Prostate gland (tissue), 2 donors: ENCODE measurements at regions of chr10 and their contacts with region 1.

Region 1: GRCh38 chr10:101214446-101215396 is 14.5 kb downstream of the LBX1 start:
- DNase-seq: peak; percentile 30
- H3K4me3 ChIP-seq: no peak overlapping the region
- H3K27ac ChIP-seq: no peak overlapping the region
- H3K4me1 ChIP-seq: peaks cover 3% of the 10 kb centered on the region
- H3K27me3 ChIP-seq: peaks cover 55% of the 10 kb centered on the region
- CTCF ChIP-seq: peak; percentile 72 to 88 (median 78)
- POLR2A ChIP-seq: no peak

Region 2: GRCh38 chr10:101291331-101292193 is 76.8 kb after region 1 on chr10:
- intact Hi-C with region 1: loop called (anchors 5 kb)
- DNase-seq: peak; percentile 24
- H3K4me3 ChIP-seq: peak overlapping the region; percentile 37 to 40
- H3K27ac ChIP-seq: no peak overlapping the region
- H3K4me1 ChIP-seq: no peaks in the 10 kb centered on the region
- H3K27me3 ChIP-seq: no peaks in the 10 kb centered on the region
- CTCF ChIP-seq: peak; percentile 22 to 57 (median 45)
- POLR2A ChIP-seq: no peak

Region 3: DNA sequence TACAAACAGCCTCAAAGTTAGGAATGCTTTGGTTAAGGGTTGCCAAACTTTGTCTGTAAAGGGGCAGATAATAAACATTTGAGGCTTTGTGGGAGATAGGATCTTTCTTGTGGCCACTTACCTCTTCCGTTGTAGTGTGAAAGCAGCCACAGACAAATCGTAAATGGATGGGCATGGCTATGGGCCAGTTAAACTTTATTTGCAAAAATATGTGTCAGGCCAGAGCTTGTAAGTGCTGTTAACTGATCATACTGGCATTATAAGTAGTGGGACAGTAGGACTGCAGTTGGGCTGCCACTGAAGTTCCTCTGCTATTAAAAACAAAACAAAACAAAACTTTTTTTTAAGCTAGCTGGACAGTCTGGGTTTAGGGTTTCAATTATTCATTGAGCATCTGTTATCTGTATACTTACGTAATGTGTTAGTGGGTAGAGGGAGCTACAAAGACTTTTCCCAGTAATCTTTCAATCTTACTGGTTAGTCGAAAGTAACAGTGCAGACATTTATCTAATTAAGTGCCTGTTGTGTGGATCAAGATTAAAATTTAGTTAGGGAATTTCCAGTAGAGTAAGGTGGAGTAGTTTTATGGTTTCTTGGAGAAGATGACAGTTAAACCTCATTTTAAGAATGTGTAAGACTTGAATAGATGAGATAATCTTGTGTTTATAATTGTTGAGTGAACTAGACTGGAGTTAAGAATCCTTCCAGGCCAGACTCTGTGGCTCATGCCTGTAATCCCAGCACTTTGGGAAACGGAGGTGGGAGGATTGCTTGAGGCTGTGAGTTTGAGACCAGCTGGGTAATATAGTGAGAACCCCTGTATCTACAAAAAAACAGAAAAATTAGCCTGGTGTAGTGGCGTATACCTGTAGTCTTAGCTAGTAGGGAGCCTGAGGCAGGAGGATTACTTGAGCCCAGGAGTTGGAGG is 239.3 kb after region 1 on chr10:
- intact Hi-C with region 1: loop called (anchors 5 kb)
- DNase-seq: no peak
- H3K4me3 ChIP-seq: no peak overlapping the region
- H3K27ac ChIP-seq: no peak overlapping the region
- H3K4me1 ChIP-seq: peaks cover 7% of the 10 kb centered on the region
- H3K27me3 ChIP-seq: no peaks in the 10 kb centered on the region
- CTCF ChIP-seq: no peak
- POLR2A ChIP-seq: no peak

Region 4: DNA sequence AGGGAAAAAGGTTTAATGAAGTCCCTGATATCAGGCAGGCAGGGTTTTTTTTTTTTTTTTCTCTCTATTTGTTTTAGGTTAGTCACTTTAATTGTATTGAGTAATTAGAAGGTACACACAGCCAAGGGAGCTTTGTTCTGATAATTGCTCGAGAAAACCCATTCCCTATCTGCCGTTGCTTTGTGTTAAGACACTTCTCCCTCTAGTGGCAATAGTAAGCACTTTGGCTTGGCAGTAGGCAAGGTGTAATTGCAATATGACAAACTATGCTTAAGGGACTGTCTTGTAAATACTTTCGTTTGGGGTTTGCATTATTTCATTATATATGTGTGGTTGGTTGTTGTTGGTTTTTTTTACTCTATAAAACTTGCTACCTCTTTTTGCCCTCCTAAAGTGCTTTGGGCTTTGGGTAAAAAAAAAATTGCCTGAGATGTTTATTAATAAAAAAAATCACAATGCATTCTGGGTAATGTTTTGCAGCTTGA is 252.6 kb after region 1 on chr10:
- intact Hi-C with region 1: loop called (anchors 2 kb)
- DNase-seq: peak; percentile 46
- H3K4me3 ChIP-seq: no peak overlapping the region
- H3K27ac ChIP-seq: no peak overlapping the region
- H3K4me1 ChIP-seq: no peaks in the 10 kb centered on the region
- H3K27me3 ChIP-seq: no peaks in the 10 kb centered on the region
- CTCF ChIP-seq: peak; percentile 45 to 76 (median 67)
- POLR2A ChIP-seq: no peak

Region 5: GRCh38 chr10:101569838-101570766 is 355.4 kb after region 1 on chr10:
- intact Hi-C with region 1: loop called (anchors 1 kb)
- DNase-seq: peak; percentile 76
- H3K4me3 ChIP-seq: peak overlapping the region; percentile 38 to 40
- H3K27ac ChIP-seq: no peak overlapping the region
- H3K4me1 ChIP-seq: no peaks in the 10 kb centered on the region
- H3K27me3 ChIP-seq: peaks cover 7% of the 10 kb centered on the region
- CTCF ChIP-seq: peak; percentile 78 to 96 (median 88)
- POLR2A ChIP-seq: no peak

Region 6: GRCh38 chr10:101782811-101783735 is 568.4 kb after region 1 on chr10 and contains the start of gene NPM3:
- intact Hi-C with region 1: loop called (anchors 5 kb)
- DNase-seq: peak; percentile 83
- H3K4me3 ChIP-seq: peak within 1 kb of the TSS; percentile 57 to 59
- H3K27ac ChIP-seq: peak within 1 kb of the TSS; percentile 39 to 53
- H3K4me1 ChIP-seq: peaks cover 5% of the 10 kb centered on the region
- H3K27me3 ChIP-seq: no peaks in the 10 kb centered on the region
- CTCF ChIP-seq: peak in 2 of 4 experiments; percentile 27
- POLR2A ChIP-seq: no peak
- total RNA-seq, gene NPM3: 43.7 to 47.4 TPM